ENCODE measurements at regions of chr19 and their contacts with region 1.

Region 1: DNA sequence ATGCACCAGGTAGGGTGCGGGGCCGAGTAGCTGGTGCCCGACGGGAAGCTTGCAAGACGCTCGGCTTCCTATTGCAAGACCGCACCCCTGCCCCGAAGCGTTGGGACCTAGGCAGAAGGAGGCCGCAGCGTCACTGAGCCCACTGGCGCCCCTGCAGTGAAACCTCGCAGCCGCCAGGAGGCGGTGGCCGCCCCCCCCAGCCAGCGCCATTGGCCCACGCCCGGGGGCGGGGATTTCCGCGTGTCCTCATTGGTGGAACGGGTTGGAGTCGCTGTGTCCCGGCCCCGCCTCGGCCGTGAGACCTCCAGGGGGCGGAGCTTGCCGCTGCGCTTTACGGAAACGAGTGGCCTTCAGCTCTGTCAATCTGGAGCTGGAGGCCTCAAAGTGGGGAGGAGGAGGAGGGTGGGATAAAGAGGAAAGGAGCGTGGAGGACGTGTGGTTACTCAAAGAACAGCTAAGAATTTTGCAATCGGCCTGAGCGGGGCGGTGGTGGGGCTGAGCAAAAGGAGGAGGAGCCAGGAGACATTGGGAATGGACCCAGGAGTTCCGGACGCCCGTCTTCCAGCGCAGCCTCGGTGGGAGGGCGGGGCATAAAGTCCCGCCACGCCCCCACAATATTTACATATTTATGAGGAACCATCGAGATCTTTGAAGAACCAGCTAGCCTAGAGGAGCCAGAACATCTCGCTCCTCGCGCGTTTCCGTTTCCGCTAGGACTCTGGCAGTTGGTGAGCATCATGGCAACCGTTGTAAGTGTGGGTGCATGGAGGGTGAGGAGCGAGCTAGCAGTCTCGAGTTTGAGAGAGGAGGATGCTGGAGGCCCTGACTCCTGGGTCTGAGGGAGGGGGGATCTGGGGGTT is at the starts of genes GYS1 and RUVBL2:
- DNase-seq: peak; percentile 99
- H3K4me3 ChIP-seq: peak within 1 kb of the TSS; percentile 96
- H3K27ac ChIP-seq: peak within 1 kb of the TSS; percentile 68
- H3K27me3 ChIP-seq: no peaks in the 10 kb centered on the region
- CTCF ChIP-seq: peak; percentile 88
- polyA plus RNA-seq, gene GYS1: 19.5 and 24.1 TPM in 2 replicates
- polyA plus RNA-seq, gene RUVBL2: 107 and 131 TPM in 2 replicates

Region 2: DNA sequence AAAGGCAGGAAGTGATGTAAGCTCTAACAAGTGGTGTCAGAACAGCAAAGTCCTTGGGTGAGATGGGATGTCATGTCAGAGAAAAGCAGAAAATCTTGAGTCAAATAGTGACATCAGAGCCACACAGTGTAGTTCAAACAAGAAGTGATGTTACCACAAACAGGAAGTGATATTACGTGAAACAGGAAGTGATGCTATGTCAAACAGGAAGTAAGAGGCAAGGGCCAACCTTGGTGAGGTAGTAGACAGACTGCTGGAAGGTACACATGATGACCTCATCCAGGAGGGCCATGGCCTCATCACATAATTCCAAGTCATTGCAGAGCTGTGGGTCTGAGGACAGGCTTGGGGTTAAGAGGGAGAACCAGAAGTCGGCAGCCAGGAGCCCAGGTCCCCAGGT is 266.8 kb before region 1 on chr19:
- CTCF ChIA-PET with region 1: interaction called, 12 read pairs
- POLR2A ChIA-PET with region 1: no interaction called
- DNase-seq: no peak
- H3K4me3 ChIP-seq: no peak overlapping the region
- H3K27ac ChIP-seq: no peak overlapping the region
- H3K27me3 ChIP-seq: peaks cover 3% of the 10 kb centered on the region
- CTCF ChIP-seq: no peak

Region 3: DNA sequence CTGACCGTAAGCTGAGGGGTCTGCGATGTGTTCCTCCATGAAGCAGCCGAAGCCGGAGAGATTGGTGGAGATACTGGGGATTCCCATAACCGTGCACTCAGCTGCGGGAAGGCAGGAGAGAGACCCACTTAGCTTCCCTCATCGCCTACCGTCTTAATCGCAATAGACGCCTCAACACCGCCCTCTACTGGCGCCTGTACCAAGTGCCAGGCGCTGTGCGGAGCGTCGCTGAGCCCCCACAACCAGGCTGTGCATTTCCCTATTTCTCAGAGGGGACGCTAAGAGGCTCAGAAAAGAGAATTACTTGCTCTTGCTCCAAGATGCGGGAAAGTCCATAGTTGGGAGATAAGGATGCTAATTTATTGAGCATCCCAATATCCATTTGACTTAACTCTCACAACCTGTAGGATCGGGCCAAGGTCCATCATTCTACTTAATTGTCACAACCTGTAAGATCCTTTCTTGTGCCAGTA is 22.4 kb before region 1 on chr19:
- CTCF ChIA-PET with region 1: interaction called, 61 read pairs
- POLR2A ChIA-PET with region 1: interaction called, 15 read pairs
- DNase-seq: no peak
- H3K4me3 ChIP-seq: no peak overlapping the region
- H3K27ac ChIP-seq: no peak overlapping the region
- H3K27me3 ChIP-seq: no peaks in the 10 kb centered on the region
- CTCF ChIP-seq: peak; percentile 94

Region 4: GRCh38 chr19:48982280-48982679 is 11.1 kb before region 1 on chr19:
- CTCF ChIA-PET with region 1: interaction called, 61 read pairs
- POLR2A ChIA-PET with region 1: interaction called, 22 read pairs
- DNase-seq: no peak
- H3K4me3 ChIP-seq: no peak overlapping the region
- H3K27ac ChIP-seq: no peak overlapping the region
- H3K27me3 ChIP-seq: no peaks in the 10 kb centered on the region
- CTCF ChIP-seq: no peak

Region 5: DNA sequence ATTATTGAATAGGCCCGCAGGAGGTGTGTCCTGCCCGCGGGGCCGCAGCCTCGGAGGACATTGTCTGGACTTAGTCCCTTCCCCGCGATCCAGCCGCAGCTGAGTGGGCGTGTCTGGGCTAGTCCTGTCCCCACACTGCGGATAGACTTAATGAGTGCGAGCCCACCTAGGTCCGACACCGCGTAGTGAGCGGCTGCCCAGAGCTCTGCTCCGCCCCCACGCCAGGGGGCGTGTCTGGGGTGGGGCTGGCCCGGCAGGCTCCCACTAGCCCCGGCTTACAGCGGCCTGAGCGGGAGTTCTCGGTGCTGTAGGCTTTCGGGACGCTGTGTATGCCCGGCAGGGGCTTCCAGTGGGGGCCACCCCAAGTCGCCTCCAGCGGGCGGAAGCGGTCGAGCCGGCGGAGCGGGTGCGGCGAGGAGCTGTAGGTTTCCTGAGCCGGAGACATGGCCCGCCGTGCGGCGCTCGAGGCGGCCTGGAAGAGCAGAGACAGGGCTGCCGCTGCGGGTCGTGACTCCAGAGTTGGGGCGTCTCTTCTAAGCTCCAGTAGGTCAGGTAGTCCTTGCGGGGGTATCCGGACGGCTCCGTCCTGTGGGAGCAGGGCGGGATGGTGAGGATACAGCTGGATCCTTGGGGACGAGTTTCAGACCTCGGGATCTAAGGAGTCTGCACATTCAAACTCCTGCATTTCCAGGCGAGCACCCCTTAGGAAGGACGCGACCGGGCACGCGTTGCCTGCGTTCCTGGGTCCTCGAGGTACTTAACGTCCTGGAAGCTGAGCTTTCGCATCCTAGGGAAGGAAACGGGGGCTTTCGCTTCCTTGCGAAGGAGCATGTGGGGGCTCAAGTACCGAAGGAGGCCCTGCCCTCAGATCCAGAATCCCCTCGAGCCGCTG is 62.9 kb after region 1 on chr19:
- CTCF ChIA-PET with region 1: interaction called, 18 read pairs
- POLR2A ChIA-PET with region 1: interaction called, 3 read pairs
- DNase-seq: no peak
- H3K4me3 ChIP-seq: peak overlapping the region; percentile 64
- H3K27ac ChIP-seq: no peak overlapping the region
- H3K27me3 ChIP-seq: no peaks in the 10 kb centered on the region
- CTCF ChIP-seq: peak; percentile 33; the same call in 1 of the 2 replicates

Measured in AG04450 (cell line).